Activated T-helper 1 cell treated with anti-CD3 and anti-CD28 coated beads, Interleukin-12 subunit alpha, Interleukin-12 subunit beta, Interleukin-2, Interleukin-4 antibody, amounts not matched to agents 30 ng/mL and 10 ng/mL and 1 ng/mL, durations not matched to agents 14 hours and 24 hours and 36 hours (primary cell): ENCODE measurements at regions of chr5 and their contacts with region 1.

Region 1: DNA sequence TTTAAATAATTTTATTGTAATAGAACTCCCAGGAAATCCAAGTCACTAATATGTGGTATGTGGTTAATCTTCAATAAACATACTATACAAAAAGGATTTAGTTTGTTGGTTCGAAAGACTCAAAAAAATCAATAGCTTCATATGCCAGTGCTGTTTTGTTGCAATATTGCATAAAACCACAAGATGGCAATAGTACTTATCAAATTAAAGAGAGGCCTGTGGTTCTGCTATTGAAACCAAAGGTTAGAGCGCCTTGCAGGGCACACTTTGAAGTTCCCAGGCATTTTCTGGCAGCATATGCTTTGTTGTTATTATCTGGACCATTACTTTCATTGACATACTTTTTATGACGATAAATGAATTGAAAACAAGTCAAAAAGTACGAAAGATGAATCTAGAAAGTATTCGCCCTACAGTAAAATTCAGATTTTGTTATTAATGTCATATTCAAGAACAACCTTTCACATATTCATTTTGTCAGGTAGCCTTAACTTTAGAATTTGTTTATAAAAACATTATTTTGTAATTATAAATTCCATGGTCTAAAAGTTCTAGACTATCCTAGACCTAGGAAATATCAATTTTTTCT is 316.3 kb downstream of the MCTP1 start:
- DNase-seq: no peak
- H3K4me3 Mint-ChIP-seq: no peak overlapping the region
- H3K27ac Mint-ChIP-seq: no peak overlapping the region
- H3K4me1 Mint-ChIP-seq: no peaks in the 10 kb centered on the region
- H3K27me3 Mint-ChIP-seq: peaks cover 1% of the 10 kb centered on the region

Region 2: DNA sequence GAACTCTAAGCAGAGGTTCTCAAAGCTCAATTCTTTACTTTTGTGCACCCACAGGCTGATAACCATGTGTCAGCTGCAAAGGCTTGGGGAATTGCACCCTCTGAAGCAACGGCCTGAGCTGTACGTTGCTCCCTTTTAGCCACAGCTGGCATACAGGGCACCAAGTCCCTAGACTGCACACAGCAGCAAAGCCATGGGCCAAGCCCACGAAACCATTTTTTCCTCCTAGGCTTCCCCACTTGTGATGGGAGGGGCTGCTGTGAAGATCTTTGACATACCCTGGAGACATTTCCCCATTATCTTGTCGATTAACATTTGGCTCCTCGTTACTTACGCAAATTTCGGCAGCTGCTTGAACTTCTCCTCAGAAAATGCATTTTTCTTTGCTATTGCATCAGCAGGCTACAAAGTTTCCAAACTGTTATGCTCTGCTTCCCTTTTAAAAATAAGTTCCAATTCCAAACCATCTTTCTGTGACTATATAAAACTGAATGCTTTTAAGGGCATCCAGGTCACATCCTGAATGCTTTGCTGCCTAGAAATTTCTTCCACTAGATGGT is 373.2 kb before region 1 on chr5:
- intact Hi-C with region 1: no loop called
- DNase-seq: no peak
- H3K4me3 Mint-ChIP-seq: no peak overlapping the region
- H3K27ac Mint-ChIP-seq: no peak overlapping the region
- H3K4me1 Mint-ChIP-seq: no peaks in the 10 kb centered on the region
- H3K27me3 Mint-ChIP-seq: no peaks in the 10 kb centered on the region

Region 3: DNA sequence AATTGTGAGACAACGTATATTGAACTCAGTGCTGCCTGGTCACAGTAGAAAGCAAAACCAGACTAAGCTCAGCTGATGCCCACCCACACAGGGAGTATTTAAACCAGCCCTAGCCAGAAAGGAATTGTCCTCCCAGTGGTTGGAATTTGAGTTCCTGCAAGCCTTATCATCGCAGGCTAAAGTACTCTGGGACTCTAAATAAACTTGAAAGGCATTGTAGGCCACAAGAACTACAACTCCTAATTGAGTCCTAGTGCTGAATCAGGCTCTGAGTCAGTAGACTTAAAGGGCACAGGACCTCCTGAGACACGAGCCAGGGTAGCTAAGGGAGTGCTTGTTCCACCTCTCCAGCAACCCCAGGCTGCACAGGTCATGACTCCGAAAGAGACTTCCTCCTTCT is 144.9 kb after region 1 on chr5:
- intact Hi-C with region 1: no loop called
- DNase-seq: no peak
- H3K4me3 Mint-ChIP-seq: no peak overlapping the region
- H3K27ac Mint-ChIP-seq: no peak overlapping the region
- H3K4me1 Mint-ChIP-seq: no peaks in the 10 kb centered on the region
- H3K27me3 Mint-ChIP-seq: no peaks in the 10 kb centered on the region

Region 4: GRCh38 chr5:95238560-95239325 is 270.1 kb after region 1 on chr5:
- intact Hi-C with region 1: loop called (anchors 5 kb)
- DNase-seq: no peak
- H3K4me3 Mint-ChIP-seq: no peak overlapping the region
- H3K27ac Mint-ChIP-seq: no peak overlapping the region
- H3K4me1 Mint-ChIP-seq: peaks cover 5% of the 10 kb centered on the region
- H3K27me3 Mint-ChIP-seq: no peaks in the 10 kb centered on the region

Region 5: GRCh38 chr5:95261437-95262175 is 293.0 kb after region 1 on chr5:
- intact Hi-C with region 1: loop called (anchors 1 kb)
- DNase-seq: no peak
- H3K4me3 Mint-ChIP-seq: no peak overlapping the region
- H3K27ac Mint-ChIP-seq: no peak overlapping the region
- H3K4me1 Mint-ChIP-seq: no peaks in the 10 kb centered on the region
- H3K27me3 Mint-ChIP-seq: peaks cover 6% of the 10 kb centered on the region

Region 6: DNA sequence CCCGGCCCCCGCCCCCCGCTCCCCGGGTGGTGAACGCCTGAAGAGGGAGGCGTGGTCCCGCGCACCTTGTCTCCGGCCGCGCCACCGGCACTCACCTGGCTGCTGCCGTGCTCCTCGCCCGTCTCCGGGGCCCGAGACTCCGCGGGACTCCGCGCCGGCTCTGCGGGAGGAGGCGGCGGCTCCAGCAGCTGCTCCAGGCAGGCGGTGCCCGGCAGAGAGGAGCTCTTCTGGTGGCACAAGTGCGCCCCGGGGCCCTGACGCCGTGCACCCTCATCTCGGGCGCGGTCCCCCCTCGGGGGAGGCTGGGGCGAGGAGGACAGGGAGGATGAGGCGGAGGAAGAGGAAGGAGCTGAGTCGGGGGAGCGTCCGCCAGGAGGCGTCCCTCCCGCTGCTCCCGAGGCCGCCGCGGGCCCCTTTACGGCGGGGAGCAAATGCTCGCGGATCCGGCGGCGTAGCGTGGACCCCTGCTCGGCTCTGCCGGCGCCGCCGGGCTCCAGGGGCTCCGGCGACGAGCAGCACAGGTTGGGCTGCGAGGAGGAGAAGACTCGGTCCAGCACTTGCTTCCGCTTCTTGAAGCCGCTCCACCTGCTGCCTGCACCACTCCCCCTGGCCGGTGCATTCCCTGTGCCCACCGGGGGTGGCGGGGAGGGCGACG is 315.3 kb after region 1 on chr5:
- intact Hi-C with region 1: loop called (anchors 5 kb)
- DNase-seq: peak; percentile 1
- H3K4me3 Mint-ChIP-seq: no peak overlapping the region
- H3K27ac Mint-ChIP-seq: no peak overlapping the region
- H3K4me1 Mint-ChIP-seq: peaks cover 11% of the 10 kb centered on the region
- H3K27me3 Mint-ChIP-seq: peaks cover 59% of the 10 kb centered on the region